CD4-positive, alpha-beta memory T cell (primary cell): ENCODE measurements at regions of chr16 and their contacts with region 1.

Region 1: GRCh38 chr16:11255737-11256660 is at the start of gene SOCS1:
- DNase-seq: peak; percentile 78 to 87 (median 83)
- H3K4me3 ChIP-seq: peak within 1 kb of the TSS; percentile 73 to 85
- H3K4me3 Mint-ChIP-seq: peak within 1 kb of the TSS; percentile 90 to 98 (median 94)
- H3K27ac ChIP-seq: peak within 1 kb of the TSS; percentile 83
- H3K27ac Mint-ChIP-seq: peak within 1 kb of the TSS; percentile 92 to 99 (median 97)
- H3K4me1 ChIP-seq: peaks cover 60% of the 10 kb centered on the region
- H3K4me1 Mint-ChIP-seq: peaks cover 38 to 77% (median 48%) of the 10 kb centered on the region in 4 donors
- H3K27me3 ChIP-seq: no peaks in the 10 kb centered on the region
- H3K27me3 Mint-ChIP-seq: no peaks in the 10 kb centered on the region
- total RNA-seq, gene SOCS1: 14.7 to 16.7 TPM

Region 2: GRCh38 chr16:10944249-10945064 is 311.5 kb before region 1 on chr16 and contains the start of gene CLEC16A:
- CTCF ChIA-PET with region 1: interaction called, 8 read pairs
- POLR2A ChIA-PET with region 1: interaction called, 17 read pairs
- intact Hi-C with region 1: loop called (anchors 1 kb)
- DNase-seq: peak; percentile 94 to 97 (median 95)
- H3K4me3 ChIP-seq: peak within 1 kb of the TSS; percentile 81 to 89
- H3K4me3 Mint-ChIP-seq: peak within 1 kb of the TSS; percentile 83 to 96 (median 90)
- H3K27ac ChIP-seq: peak within 1 kb of the TSS; percentile 83
- H3K27ac Mint-ChIP-seq: peak within 1 kb of the TSS; percentile 66 to 94 (median 88)
- H3K4me1 ChIP-seq: peaks cover 74% of the 10 kb centered on the region
- H3K4me1 Mint-ChIP-seq: peaks cover 49 to 86% (median 67%) of the 10 kb centered on the region in 4 donors
- H3K27me3 ChIP-seq: no peaks in the 10 kb centered on the region
- H3K27me3 Mint-ChIP-seq: no peaks in the 10 kb centered on the region
- total RNA-seq, gene CLEC16A: 24.8 to 28.4 TPM

Region 3: GRCh38 chr16:10981697-10982216 is 274.2 kb before region 1 on chr16:
- CTCF ChIA-PET with region 1: interaction called, 8 read pairs
- POLR2A ChIA-PET with region 1: interaction called, 25 read pairs
- intact Hi-C with region 1: no loop called
- DNase-seq: no peak
- H3K4me3 ChIP-seq: no peak overlapping the region
- H3K4me3 Mint-ChIP-seq: no peak overlapping the region
- H3K27ac ChIP-seq: no peak overlapping the region
- H3K27ac Mint-ChIP-seq: peak overlapping the region in 1 of 7 donors; percentile 74
- H3K4me1 ChIP-seq: peaks cover 15% of the 10 kb centered on the region
- H3K4me1 Mint-ChIP-seq: peaks cover 20 to 29% (median 27%) of the 10 kb centered on the region in 4 donors
- H3K27me3 ChIP-seq: no peaks in the 10 kb centered on the region
- H3K27me3 Mint-ChIP-seq: no peaks in the 10 kb centered on the region

Region 4: DNA sequence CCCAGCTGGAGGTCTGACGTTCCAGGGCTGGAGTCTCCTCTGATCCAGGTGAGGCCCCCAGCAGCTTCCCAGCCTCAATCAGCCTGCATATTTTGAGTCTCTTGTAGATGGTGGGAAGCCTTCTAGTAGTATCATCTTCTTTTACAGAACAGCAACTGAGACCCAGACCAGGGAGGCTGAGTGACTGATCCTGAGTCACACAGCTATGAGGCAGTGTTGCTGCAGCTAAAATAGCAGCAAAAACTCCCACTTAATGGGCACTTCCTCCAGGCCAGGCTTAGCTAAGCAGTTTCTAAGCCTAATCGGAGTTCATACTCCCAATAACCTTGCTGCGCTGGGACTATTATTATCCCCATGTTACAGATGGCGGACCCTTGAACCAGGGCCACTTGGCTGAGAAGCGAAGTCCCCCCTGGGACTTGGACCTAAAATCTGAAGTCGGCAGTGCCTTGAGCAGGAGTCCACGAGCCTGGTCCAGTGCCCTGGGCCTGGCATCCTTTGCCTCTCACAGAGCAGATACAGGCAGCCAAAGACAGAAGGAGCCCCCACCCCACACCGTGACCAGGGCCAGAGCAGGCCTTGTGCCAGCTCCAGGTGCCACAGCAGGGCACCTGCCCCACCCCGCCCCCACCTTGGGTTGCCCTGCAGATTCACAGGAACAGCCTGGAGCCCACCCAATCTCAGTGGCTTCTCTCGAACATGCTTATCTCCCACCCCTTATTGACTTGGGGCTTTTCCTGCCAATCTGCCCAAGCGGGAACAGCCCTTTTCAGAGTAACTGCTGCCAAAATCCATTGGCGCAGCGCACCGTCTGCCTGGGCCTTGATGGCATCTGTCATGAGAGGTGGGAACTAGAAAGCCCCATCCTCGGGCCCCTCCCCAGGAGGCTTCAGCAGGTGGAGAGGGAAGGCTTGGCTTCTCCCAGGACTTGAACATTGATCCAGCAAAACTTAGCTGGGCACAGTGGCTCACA is 65.1 kb before region 1 on chr16:
- CTCF ChIA-PET with region 1: interaction called, 4 read pairs
- POLR2A ChIA-PET with region 1: interaction called, 6 read pairs
- intact Hi-C with region 1: loop called (anchors 5 kb)
- DNase-seq: no peak
- H3K4me3 ChIP-seq: no peak overlapping the region
- H3K4me3 Mint-ChIP-seq: no peak overlapping the region
- H3K27ac ChIP-seq: no peak overlapping the region
- H3K27ac Mint-ChIP-seq: peak overlapping the region in 2 of 7 donors; percentile 66 to 81
- H3K4me1 ChIP-seq: no peaks in the 10 kb centered on the region
- H3K4me1 Mint-ChIP-seq: no peaks in the 10 kb centered on the region
- H3K27me3 ChIP-seq: no peaks in the 10 kb centered on the region
- H3K27me3 Mint-ChIP-seq: no peaks in the 10 kb centered on the region

Region 5: DNA sequence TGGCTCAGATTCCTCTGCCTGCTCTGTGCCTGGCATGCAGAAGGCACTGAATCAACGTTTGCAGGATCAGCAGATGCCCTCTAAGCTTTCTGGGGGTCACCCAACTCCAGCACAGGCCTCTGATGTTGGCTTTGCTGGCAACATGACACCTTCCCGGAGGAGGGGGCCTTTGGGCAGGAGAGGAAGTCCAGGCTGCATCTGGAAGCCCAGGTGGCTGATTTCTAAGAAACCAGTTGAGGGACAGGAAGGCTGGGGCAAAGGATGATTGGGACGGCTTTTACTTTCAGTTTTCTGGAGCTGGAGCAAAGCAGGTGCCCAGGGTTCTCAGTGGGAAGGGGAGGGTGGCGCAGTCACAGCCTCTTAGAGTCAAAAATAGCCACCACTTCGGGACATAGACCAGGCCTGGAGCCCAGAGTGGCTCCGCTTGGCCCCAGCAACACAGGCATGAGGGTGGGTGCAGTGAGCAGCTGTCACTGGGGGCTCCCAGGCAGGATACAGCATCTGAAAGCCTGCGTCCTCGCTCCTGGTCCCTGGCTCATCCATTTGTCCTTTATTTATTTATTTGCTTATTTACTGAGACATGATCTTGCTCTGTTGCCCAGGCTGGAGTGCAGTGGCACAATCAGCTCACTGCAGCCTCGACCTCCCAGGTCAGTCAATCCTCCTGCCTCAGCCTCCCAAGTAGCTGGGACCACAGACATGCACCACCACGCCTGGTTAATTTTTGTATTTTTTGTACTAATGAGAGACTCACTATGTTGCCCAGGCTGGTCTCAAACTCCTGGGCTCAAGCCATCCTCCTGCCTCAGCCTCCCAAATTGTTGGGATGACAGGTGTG is 15.1 kb before region 1 on chr16:
- CTCF ChIA-PET with region 1: interaction called, 17 read pairs
- POLR2A ChIA-PET with region 1: interaction called, 127 read pairs
- intact Hi-C with region 1: no loop called
- DNase-seq: no peak
- H3K4me3 ChIP-seq: no peak overlapping the region
- H3K4me3 Mint-ChIP-seq: peak overlapping the region in 7 of 8 donors; percentile 49 to 80 (median 66)
- H3K27ac ChIP-seq: no peak overlapping the region
- H3K27ac Mint-ChIP-seq: peak overlapping the region in 5 of 7 donors; percentile 51 to 92 (median 75)
- H3K4me1 ChIP-seq: peaks cover 24% of the 10 kb centered on the region
- H3K4me1 Mint-ChIP-seq: peaks cover 4 to 13% (median 10%) of the 10 kb centered on the region in 4 donors
- H3K27me3 ChIP-seq: no peaks in the 10 kb centered on the region
- H3K27me3 Mint-ChIP-seq: no peaks in the 10 kb centered on the region

Region 6: DNA sequence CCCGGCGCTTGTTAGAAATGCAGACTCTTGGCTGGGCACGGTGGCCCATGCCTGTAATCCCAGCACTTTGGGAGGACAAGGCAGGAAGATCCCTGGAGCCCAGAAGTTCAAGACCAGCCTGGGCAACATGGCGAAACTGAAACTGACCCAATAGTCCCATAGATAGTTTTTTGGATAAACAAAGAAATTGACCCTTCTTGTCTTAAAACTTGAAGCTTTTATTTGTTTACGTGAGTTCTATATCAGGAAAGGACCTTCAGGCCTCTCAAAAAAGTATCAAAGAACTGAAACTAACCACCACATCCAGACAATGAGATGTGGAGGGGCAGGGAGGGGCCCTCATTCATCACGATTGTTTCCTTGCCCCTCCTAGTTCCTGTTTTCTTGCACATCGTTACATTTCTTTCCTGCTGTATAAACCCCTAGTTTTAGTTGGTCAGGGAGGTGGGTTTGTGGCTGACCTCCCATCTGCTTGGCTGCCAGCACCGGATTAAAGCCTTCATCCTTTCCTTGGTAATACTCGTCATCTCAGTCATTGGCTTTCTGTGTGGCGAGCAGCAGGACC is 55.1 kb after region 1 on chr16:
- CTCF ChIA-PET with region 1: interaction called, 4 read pairs
- POLR2A ChIA-PET with region 1: interaction called, 11 read pairs
- intact Hi-C with region 1: no loop called
- DNase-seq: peak; percentile 62 to 70 (median 63)
- H3K4me3 ChIP-seq: no peak overlapping the region
- H3K4me3 Mint-ChIP-seq: peak overlapping the region in 7 of 8 donors; percentile 66 to 81 (median 78)
- H3K27ac ChIP-seq: peak overlapping the region; percentile 4
- H3K27ac Mint-ChIP-seq: peak overlapping the region; percentile 55 to 97 (median 90)
- H3K4me1 ChIP-seq: peaks cover 37% of the 10 kb centered on the region
- H3K4me1 Mint-ChIP-seq: peaks cover 22 to 45% (median 34%) of the 10 kb centered on the region in 4 donors
- H3K27me3 ChIP-seq: no peaks in the 10 kb centered on the region
- H3K27me3 Mint-ChIP-seq: no peaks in the 10 kb centered on the region

Region 7: GRCh38 chr16:11915644-11916523 is 659.9 kb after region 1 on chr16 and contains the start of gene GSPT1:
- CTCF ChIA-PET with region 1: no interaction called
- POLR2A ChIA-PET with region 1: interaction called, 4 read pairs
- intact Hi-C with region 1: loop called (anchors 10 kb)
- DNase-seq: peak; percentile 99 to 100 (median 99)
- H3K4me3 ChIP-seq: peak within 1 kb of the TSS; percentile 67 to 72
- H3K4me3 Mint-ChIP-seq: peak within 1 kb of the TSS; percentile 94 to 99 (median 98)
- H3K27ac ChIP-seq: peak within 1 kb of the TSS; percentile 72
- H3K27ac Mint-ChIP-seq: peak within 1 kb of the TSS; percentile 96 to 100 (median 97)
- H3K4me1 ChIP-seq: peaks cover 35% of the 10 kb centered on the region
- H3K4me1 Mint-ChIP-seq: peaks cover 24 to 45% (median 30%) of the 10 kb centered on the region in 4 donors
- H3K27me3 ChIP-seq: no peaks in the 10 kb centered on the region
- H3K27me3 Mint-ChIP-seq: peaks cover 0 to 2% of the 10 kb centered on the region in 2 donors
- total RNA-seq, gene GSPT1: 97.9 to 99.5 TPM